ENCODE measurements at regions of chr10 and their contacts with region 1.

Region 1: DNA sequence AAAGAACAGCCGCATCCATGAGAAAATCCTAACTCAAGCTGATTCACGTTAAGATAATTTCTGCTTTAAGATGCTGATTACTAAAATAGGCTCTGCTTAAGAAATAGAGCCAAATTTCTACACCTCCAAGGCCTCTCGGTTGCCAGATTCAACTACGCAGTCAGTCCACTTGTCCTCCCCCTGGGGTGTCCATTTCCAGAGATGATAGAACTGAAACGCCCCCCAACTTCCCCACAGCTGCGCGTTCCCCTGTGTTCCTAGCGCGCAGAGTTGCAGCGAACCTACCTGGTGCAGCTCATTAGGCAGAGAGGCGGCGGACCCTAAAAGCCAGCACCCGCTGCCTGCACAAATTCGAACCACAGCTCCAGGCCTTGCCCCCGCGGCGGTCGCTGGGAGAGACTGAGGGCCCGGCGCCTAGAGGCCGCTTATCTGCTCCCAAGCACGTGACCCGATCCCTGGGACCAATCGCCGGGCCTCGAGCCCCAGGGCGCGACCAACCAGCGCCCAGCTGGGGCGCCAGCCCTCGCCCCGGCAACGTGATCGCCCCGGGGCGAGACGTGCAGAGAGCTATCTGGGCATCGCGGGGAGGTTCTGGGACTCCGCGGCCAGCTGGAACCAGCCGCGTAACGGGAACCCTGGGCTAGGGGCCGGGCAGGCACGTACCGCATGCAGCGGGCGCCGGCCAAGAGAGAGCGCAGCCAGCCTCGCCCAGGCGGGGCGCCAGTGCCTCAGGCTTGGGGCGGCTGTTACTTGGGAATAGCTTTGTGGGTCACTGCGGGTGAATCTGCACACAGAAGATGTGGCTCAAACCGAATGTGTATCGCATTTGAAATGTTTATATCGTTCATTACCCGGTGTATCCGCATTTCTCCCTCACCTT is at the start of gene PPP1R3C:
- DNase-seq: peak; percentile 80
- H3K4me3 ChIP-seq: peak within 1 kb of the TSS; percentile 79
- CTCF ChIP-seq: peak; percentile 68

Region 2: DNA sequence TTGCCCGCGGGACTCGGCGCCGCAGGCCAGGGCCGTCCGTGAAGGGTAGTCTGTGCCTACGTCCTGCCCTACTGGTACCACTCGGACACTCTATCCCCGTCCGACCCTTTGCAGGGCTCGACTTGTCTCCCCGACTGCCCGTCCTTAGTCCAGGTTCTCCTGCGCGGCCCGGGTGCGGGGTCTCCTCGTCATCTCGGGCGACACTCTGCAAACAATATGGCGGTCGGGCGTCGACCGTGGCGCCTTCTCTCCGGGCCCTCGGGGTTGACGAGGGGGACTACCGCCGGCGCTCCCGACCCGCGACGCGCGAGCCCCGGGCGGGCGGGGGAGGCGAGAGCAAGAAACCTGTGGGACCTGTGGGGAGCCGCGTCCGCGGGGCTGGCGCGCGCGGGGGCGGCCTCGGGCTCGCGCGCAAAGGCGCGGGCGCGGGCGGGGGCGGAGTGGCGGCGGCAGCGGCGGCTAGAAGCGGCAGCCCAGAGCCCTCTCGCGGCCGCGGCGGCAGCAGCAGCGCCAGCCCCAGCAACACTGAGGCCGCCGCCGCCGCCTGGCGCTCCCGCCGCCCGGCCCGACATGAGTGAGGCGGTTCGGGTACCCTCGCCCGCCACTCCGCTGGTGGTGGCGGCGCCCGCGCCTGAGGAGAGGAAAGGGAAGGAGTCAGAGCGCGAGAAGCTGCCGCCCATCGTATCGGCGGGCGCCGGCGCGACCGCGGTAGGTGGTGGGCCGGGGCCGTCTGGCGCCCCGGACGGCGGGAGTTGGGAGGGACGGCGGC is 222.9 kb before region 1 on chr10 and contains the start of gene HECTD2:
- CTCF ChIA-PET with region 1: interaction called, 12 read pairs
- POLR2A ChIA-PET with region 1: interaction called, 4 read pairs
- DNase-seq: no peak
- H3K4me3 ChIP-seq: peak within 1 kb of the TSS; percentile 79
- CTCF ChIP-seq: peak; percentile 38

Region 3: GRCh38 chr10:91551856-91552255 is 81.1 kb before region 1 on chr10:
- CTCF ChIA-PET with region 1: interaction called, 142 read pairs
- POLR2A ChIA-PET with region 1: interaction called, 14 read pairs
- DNase-seq: no peak
- H3K4me3 ChIP-seq: no peak overlapping the region
- CTCF ChIP-seq: peak; percentile 79

Region 4: DNA sequence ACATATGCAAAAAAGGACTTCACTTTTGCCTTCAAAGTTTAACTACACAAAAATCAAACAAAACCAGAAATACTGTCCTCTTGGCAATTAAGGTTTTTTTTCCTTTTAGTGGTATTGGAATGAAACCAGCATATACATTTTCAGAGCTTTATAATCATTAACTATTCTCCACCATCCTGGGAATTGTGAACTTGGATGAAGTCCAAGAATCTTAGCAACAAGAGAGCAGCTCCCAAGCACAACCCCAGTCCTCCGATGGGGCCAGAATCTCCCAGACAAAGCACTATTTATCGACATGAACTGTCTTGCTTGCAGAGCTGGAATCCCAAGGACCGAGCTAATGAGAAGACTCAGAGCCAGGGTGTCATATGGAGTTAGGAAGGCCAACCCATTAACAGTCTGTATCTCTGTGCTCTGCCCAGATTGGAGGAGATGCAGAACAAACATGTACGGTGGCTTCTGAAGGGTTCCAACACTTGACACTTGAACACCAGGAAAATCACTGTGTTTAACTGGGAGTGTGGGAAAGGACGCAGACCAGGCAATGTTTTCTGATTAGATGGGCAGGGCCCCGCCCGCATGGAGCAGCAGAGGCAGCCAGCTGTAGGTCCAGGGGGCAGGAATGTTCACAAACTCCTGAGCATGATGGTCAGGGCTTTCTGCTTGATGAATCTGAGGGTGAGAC is 35.6 kb before region 1 on chr10:
- CTCF ChIA-PET with region 1: interaction called, 11 read pairs
- POLR2A ChIA-PET with region 1: interaction called, 10 read pairs
- DNase-seq: no peak
- H3K4me3 ChIP-seq: no peak overlapping the region
- CTCF ChIP-seq: no peak

Region 5: DNA sequence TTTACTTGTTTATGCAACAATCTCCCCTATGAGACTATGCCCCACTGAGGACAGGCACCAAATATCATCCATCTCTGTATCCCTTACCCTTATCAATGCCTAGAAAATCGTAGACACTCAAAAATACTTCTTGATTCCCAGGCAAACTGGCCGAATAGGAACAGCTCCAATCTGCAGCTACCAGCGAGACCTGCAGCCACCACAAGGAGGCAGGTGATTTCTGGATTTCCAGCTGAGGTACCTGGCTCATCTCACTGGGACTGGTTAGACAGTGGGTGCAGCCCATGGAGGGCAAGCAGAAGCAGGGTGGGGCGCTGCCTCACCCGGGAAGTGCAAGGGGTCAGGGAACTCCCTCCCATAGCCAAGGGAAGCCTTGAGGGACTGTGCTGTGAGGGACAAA is 10.8 kb after region 1 on chr10:
- CTCF ChIA-PET with region 1: interaction called, 39 read pairs
- POLR2A ChIA-PET with region 1: interaction called, 7 read pairs
- DNase-seq: no peak
- H3K4me3 ChIP-seq: no peak overlapping the region
- CTCF ChIP-seq: peak; percentile 35

Region 6: DNA sequence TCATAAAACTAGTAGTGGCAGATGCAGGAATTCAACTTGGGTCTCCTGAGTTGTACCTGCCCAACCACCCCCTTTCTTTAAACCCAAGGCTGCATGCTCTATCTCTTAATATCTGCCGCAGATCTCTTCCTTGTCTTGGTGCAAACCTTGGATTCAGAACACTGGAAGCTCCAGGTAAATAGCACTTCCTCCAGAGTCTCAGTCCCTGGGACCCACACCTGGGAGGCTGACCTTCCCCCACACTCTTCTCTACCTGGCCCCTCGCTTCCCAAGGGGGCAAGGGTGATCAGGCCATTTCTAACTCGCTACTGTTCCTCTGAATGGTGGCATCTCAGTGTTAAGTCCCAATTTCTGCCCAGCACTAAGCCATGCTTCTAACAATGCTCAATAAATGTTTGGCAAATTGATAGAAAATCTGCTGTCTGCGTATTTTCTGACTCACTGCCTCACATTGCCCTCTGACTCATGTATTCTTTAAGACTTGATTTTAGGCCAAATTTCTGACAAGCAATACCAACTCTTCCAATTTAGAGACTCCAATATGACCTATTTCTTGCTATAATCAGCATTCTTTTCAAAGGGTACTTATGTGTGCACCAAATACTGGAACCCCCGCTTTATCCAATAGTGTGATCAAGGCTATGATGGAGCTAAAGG is 68.0 kb after region 1 on chr10:
- CTCF ChIA-PET with region 1: interaction called, 14 read pairs
- POLR2A ChIA-PET with region 1: interaction called, 3 read pairs
- DNase-seq: no peak
- H3K4me3 ChIP-seq: no peak overlapping the region
- CTCF ChIP-seq: no peak

Measured in AG04449 (cell line).